ENCODE measurements at regions of chr2 and their contacts with region 1.

Region 1: DNA sequence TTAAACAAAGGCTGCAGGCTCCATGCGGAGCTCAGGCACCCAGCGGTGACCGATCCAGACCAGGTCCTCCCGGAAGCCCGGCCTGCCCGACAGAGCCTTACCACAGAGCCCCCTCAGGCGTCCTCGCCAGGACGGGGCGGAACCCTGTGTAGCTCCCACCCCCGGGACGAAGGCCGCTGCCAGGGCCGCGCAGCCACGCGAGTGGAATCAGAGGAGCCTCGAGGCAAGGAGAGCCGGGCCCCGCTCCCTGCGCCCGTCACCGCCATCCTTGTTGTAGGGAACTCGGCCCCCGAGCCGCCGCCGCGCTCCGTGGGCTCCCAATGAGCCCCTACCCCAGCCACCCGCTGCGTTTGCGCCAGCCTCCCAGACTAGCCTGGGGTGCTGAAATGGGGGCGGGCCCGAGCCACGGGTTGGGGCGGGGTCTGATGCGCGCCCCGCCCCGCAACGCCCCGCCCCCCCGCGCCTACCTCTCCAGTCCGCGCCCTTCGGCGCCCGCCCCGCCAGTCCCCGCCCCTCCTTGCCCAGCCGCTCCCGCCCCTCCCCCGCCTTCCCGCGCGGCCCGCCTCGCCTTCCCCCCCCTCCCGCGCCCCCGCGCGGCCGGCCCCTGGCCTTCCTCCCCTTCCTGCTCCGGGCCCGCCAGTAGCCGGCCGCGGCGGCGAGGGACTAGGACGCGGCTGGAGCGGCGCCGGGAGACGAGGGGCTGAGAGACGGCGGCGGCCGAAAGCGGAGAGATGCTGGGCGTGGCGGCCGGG is at the start of gene LIMS1:
- DNase-seq: peak; percentile 67 to 90 (median 88)
- ATAC-seq: peak; percentile 95
- H3K4me3 ChIP-seq: peak within 1 kb of the TSS; percentile 76 to 88
- H3K4me3 Mint-ChIP-seq: peak within 1 kb of the TSS; percentile 98
- H3K27ac ChIP-seq: peak within 1 kb of the TSS; percentile 42 to 59
- H3K27ac Mint-ChIP-seq: peak within 1 kb of the TSS; percentile 88
- H3K4me1 ChIP-seq: peaks cover 7% of the 10 kb centered on the region
- H3K4me1 Mint-ChIP-seq: peaks cover 23% of the 10 kb centered on the region
- H3K27me3 ChIP-seq: no peaks in the 10 kb centered on the region
- H3K27me3 Mint-ChIP-seq: no peaks in the 10 kb centered on the region
- CTCF ChIP-seq: no peak
- total RNA-seq, gene LIMS1: 10.1 to 10.6 TPM

Region 2: DNA sequence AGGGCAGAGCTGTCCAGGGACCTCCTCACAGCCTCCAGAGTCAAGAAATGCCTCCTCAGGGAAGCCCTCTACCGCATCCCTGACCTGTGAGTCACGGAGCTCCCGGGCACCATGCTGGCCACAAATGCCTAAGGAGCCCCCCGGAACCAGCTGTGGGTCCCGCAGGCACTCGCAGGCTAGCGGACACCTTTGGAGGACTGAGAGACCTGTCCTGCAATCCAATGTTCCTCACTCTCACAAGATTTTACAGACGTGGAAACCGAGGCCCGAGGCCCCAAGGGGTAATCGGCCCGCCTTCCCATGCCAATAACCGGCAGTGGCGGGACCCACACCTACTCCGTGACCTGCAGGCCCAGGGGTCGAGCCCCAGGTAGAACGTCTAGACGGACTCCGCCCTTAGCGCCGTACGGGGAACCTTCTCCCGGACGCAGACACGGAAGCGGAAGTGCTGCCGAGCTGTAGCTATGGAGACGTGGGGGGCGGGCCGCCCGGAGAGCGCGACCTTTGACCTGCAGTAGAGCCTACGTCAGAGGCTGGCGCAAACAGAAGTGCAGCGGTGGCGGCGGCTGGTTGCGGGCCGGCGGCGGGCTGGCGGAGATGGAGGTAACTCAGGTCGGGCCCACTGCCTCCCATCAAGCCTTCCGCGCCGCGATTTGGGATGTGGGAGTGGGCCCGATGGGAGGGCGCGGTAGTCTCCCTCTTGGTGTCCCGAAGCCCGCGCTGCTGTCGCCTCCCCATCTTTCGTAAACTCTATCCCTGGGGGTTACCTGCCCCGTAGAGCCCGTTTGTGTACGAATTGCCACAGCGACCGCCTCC is 85.1 kb before region 1 on chr2 and contains the start of gene GCC2:
- CTCF ChIA-PET with region 1: interaction called, 3 read pairs
- POLR2A ChIA-PET with region 1: interaction called, 9 read pairs
- intact Hi-C with region 1: loop called (anchors 1 kb)
- DNase-seq: peak; percentile 94 to 98 (median 97)
- ATAC-seq: peak; percentile 90
- H3K4me3 ChIP-seq: peak within 1 kb of the TSS; percentile 97
- H3K4me3 Mint-ChIP-seq: peak within 1 kb of the TSS; percentile 97
- H3K27ac ChIP-seq: peak within 1 kb of the TSS; percentile 98 to 99
- H3K27ac Mint-ChIP-seq: peak within 1 kb of the TSS; percentile 99
- H3K4me1 ChIP-seq: peaks cover 18% of the 10 kb centered on the region
- H3K4me1 Mint-ChIP-seq: peaks cover 41% of the 10 kb centered on the region
- H3K27me3 ChIP-seq: no peaks in the 10 kb centered on the region
- H3K27me3 Mint-ChIP-seq: no peaks in the 10 kb centered on the region
- CTCF ChIP-seq: no peak
- total RNA-seq, gene GCC2: 147 to 157 TPM

Region 3: GRCh38 chr2:108485253-108485652 is 48.8 kb before region 1 on chr2:
- CTCF ChIA-PET with region 1: no interaction called
- POLR2A ChIA-PET with region 1: no interaction called
- intact Hi-C with region 1: loop called in 1 of 2 experiments (anchors 5 kb)
- DNase-seq: no peak
- ATAC-seq: no peak
- H3K4me3 ChIP-seq: no peak overlapping the region
- H3K4me3 Mint-ChIP-seq: no peak overlapping the region
- H3K27ac ChIP-seq: no peak overlapping the region
- H3K27ac Mint-ChIP-seq: no peak overlapping the region
- H3K4me1 ChIP-seq: no peaks in the 10 kb centered on the region
- H3K4me1 Mint-ChIP-seq: peaks cover 4% of the 10 kb centered on the region
- H3K27me3 ChIP-seq: no peaks in the 10 kb centered on the region
- H3K27me3 Mint-ChIP-seq: no peaks in the 10 kb centered on the region
- CTCF ChIP-seq: no peak

Region 4: GRCh38 chr2:108607706-108608301 is 73.8 kb after region 1 on chr2:
- CTCF ChIA-PET with region 1: no interaction called
- POLR2A ChIA-PET with region 1: no interaction called
- intact Hi-C with region 1: no loop called
- DNase-seq: peak in 7 of 9 experiments; percentile 23 to 65 (median 48)
- ATAC-seq: peak; percentile 50
- H3K4me3 ChIP-seq: no peak overlapping the region
- H3K4me3 Mint-ChIP-seq: no peak overlapping the region
- H3K27ac ChIP-seq: no peak overlapping the region
- H3K27ac Mint-ChIP-seq: no peak overlapping the region
- H3K4me1 ChIP-seq: peaks cover 5% of the 10 kb centered on the region
- H3K4me1 Mint-ChIP-seq: peaks cover 29% of the 10 kb centered on the region
- H3K27me3 ChIP-seq: no peaks in the 10 kb centered on the region
- H3K27me3 Mint-ChIP-seq: no peaks in the 10 kb centered on the region
- CTCF ChIP-seq: peak; percentile 72

Region 5: DNA sequence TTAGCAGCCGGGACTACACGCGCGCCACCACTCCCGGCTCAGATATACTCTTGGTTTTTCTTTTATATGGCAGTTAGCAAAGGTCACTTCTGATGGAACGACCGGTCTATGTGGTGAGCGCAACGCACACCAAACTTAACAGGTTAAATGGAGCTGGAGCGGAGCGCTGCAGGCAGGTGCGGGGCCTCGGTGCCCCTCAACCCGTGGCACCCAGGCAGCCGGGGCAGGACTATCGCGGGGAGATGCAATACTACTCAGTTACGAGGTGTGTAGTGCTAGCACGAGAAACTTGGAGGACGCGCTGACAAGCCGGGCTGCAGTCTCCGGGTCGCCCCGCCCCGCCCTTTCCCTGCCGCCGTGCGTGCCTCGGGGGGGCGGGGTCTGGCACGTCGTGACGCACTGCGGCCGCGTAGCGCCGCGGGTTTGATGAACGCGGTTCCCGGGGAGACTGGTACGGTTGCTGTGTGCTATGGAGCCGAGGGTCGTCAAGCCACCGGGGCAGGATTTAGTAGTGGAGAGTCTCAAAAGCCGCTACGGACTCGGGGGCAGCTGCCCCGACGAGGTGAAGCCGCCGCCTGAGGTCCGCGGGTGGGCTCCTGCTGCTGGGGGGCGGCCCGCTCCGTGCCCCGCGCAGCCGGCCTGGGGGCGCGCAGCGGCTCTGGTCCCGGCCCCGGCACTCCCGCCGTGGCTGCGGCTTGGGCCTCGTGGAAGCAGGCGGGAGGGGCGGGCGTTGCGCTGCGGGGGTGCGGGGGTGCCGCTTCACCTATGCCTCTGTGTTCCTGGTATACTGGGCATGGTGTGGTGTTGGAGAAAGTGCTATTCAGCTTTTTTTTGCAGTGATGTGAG is 252.6 kb after region 1 on chr2 and contains the start of gene CCDC138:
- CTCF ChIA-PET with region 1: no interaction called
- POLR2A ChIA-PET with region 1: no interaction called
- intact Hi-C with region 1: loop called in 1 of 2 experiments (anchors 5 kb)
- DNase-seq: peak; percentile 85 to 95 (median 93)
- ATAC-seq: peak; percentile 97
- H3K4me3 ChIP-seq: peak within 1 kb of the TSS; percentile 76 to 90
- H3K4me3 Mint-ChIP-seq: peak within 1 kb of the TSS; percentile 99
- H3K27ac ChIP-seq: peak within 1 kb of the TSS; percentile 77 to 83
- H3K27ac Mint-ChIP-seq: peak within 1 kb of the TSS; percentile 97
- H3K4me1 ChIP-seq: peaks cover 10% of the 10 kb centered on the region
- H3K4me1 Mint-ChIP-seq: peaks cover 22% of the 10 kb centered on the region
- H3K27me3 ChIP-seq: no peaks in the 10 kb centered on the region
- H3K27me3 Mint-ChIP-seq: no peaks in the 10 kb centered on the region
- CTCF ChIP-seq: no peak
- total RNA-seq, gene CCDC138: 4.6 to 5.9 TPM